H1 (cell line): ENCODE measurements at regions of chr6 and their contacts with region 1.

Region 1: GRCh38 chr6:24274441-24275083 is 83.3 kb downstream of the DCDC2 start:
- DNase-seq: no peak
- H3K4me3 ChIP-seq: no peak overlapping the region
- H3K27ac ChIP-seq: no peak overlapping the region
- H3K4me1 ChIP-seq: no peaks in the 10 kb centered on the region
- H3K27me3 ChIP-seq: no peaks in the 10 kb centered on the region
- CTCF ChIP-seq: peak in 2 of 3 experiments; percentile 19 to 35; a peak in 2 of 4 replicates
- EP300 ChIP-seq: no peak
- POLR2A ChIP-seq: no peak
- RAD21 ChIP-seq: peak in 1 of 2 experiments; percentile 62

Region 2: GRCh38 chr6:24064082-24064481 is 210.5 kb before region 1 on chr6:
- CTCF ChIA-PET with region 1: interaction called, 16 read pairs
- POLR2A ChIA-PET with region 1: no interaction called
- DNase-seq: no peak
- H3K4me3 ChIP-seq: no peak overlapping the region
- H3K27ac ChIP-seq: no peak overlapping the region
- H3K4me1 ChIP-seq: no peaks in the 10 kb centered on the region
- H3K27me3 ChIP-seq: no peaks in the 10 kb centered on the region
- CTCF ChIP-seq: peak in 2 of 3 experiments; percentile 73 to 76; a peak in 3 of 4 replicates
- EP300 ChIP-seq: no peak
- POLR2A ChIP-seq: no peak
- RAD21 ChIP-seq: peak; percentile 93 to 96

Region 3: GRCh38 chr6:24255676-24256075 is 18.9 kb before region 1 on chr6:
- CTCF ChIA-PET with region 1: interaction called, 27 read pairs
- POLR2A ChIA-PET with region 1: no interaction called
- DNase-seq: no peak
- H3K4me3 ChIP-seq: no peak overlapping the region
- H3K27ac ChIP-seq: no peak overlapping the region
- H3K4me1 ChIP-seq: peaks cover 2 to 12% (median 8%) of the 10 kb centered on the region in 4 experiments; a peak in 6 of 7 replicates
- H3K27me3 ChIP-seq: no peaks in the 10 kb centered on the region
- CTCF ChIP-seq: no peak
- EP300 ChIP-seq: no peak
- POLR2A ChIP-seq: no peak
- RAD21 ChIP-seq: no peak

Region 4: DNA sequence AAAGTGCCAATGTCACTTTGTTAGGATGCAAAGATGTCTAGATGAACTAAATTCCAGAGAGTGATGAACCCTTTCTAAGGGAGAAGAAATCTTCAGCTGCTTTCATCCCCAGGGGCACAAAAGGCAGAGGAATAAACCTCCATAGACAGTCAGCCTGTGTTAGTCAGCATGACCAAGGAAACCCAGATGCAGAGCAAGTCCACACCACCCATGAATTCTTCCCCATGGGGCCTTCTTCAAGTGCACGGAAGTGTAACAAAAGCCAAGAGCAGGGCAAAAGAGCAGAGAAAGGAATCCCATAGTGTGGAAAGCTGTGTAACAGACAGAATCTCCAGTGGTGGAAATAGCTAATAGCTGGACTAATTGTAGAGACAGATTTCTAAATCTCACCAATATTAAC is 33.3 kb after region 1 on chr6:
- CTCF ChIA-PET with region 1: interaction called, 18 read pairs
- POLR2A ChIA-PET with region 1: no interaction called
- DNase-seq: no peak
- H3K4me3 ChIP-seq: no peak overlapping the region
- H3K27ac ChIP-seq: no peak overlapping the region
- H3K4me1 ChIP-seq: peaks cover 0 to 2% (median 0%) of the 10 kb centered on the region in 4 experiments; a peak in 2 of 7 replicates
- H3K27me3 ChIP-seq: peaks cover 0 to 1% (median 0%) of the 10 kb centered on the region in 4 experiments; a peak in 2 of 7 replicates
- CTCF ChIP-seq: no peak
- EP300 ChIP-seq: no peak
- POLR2A ChIP-seq: no peak
- RAD21 ChIP-seq: no peak